Dendritic cell treated with granulocyte-macrophage colony-stimulating factor and Interleukin-4, amounts not matched to agents 40 ng/mL and 50 ng/mL, for 4 days (primary cell): ENCODE measurements at regions of chr4 and their contacts with region 1.

Region 1: GRCh38 chr4:84733343-84734033 is 150.6 kb downstream of the CDS1 start:
- H3K4me3 Mint-ChIP-seq: no peak overlapping the region
- H3K27ac Mint-ChIP-seq: no peak overlapping the region
- H3K4me1 Mint-ChIP-seq: no peaks in the 10 kb centered on the region
- H3K27me3 Mint-ChIP-seq: no peaks in the 10 kb centered on the region

Region 2: GRCh38 chr4:84767168-84767567 is 33.7 kb after region 1 on chr4:
- intact Hi-C with region 1: no loop called
- H3K4me3 Mint-ChIP-seq: no peak overlapping the region
- H3K27ac Mint-ChIP-seq: no peak overlapping the region
- H3K4me1 Mint-ChIP-seq: no peaks in the 10 kb centered on the region
- H3K27me3 Mint-ChIP-seq: no peaks in the 10 kb centered on the region

Region 3: GRCh38 chr4:84792366-84793301 is 59.1 kb after region 1 on chr4:
- intact Hi-C with region 1: loop called (anchors 10 kb)
- H3K4me3 Mint-ChIP-seq: no peak overlapping the region
- H3K27ac Mint-ChIP-seq: no peak overlapping the region
- H3K4me1 Mint-ChIP-seq: no peaks in the 10 kb centered on the region
- H3K27me3 Mint-ChIP-seq: no peaks in the 10 kb centered on the region